HepG2 (cell line): ENCODE measurements at regions of chr12 and their contacts with region 1.

Region 1: GRCh38 chr12:6873094-6874014 is at the start of gene SPSB2:
- DNase-seq: peak; percentile 94
- ATAC-seq: peak; percentile 81
- H3K4me3 ChIP-seq: peak within 1 kb of the TSS; percentile 74 to 95 (median 76)
- H3K27ac ChIP-seq: peak within 1 kb of the TSS; percentile 79
- H3K4me1 ChIP-seq: peaks cover 48% of the 10 kb centered on the region
- H3K27me3 ChIP-seq: no peaks in the 10 kb centered on the region; a peak in 1 of 5 replicates
- CTCF ChIP-seq: no peak
- EP300 ChIP-seq: 0 out of 4 replicates have a peak, but pooled peaks of 1 of the 2 experiments have one; percentile 5
- POLR2A ChIP-seq: no peak; a peak in 1 of 4 replicates
- RAD21 ChIP-seq: no peak
- total RNA-seq, gene SPSB2: 4.0 and 6.2 TPM in 2 replicates

Region 2: GRCh38 chr12:6884539-6884938 is 11.2 kb after region 1 on chr12:
- CTCF ChIA-PET with region 1: no interaction called
- POLR2A ChIA-PET with region 1: interaction called, 73 read pairs
- in situ Hi-C with region 1: no loop called
- intact Hi-C with region 1: no loop called
- DNase-seq: no peak
- ATAC-seq: no peak
- H3K4me3 ChIP-seq: no peak overlapping the region
- H3K27ac ChIP-seq: no peak overlapping the region
- H3K4me1 ChIP-seq: peaks cover 61% of the 10 kb centered on the region
- H3K27me3 ChIP-seq: no peaks in the 10 kb centered on the region
- CTCF ChIP-seq: no peak
- EP300 ChIP-seq: no peak
- POLR2A ChIP-seq: no peak
- RAD21 ChIP-seq: no peak

Region 3: GRCh38 chr12:6904280-6905278 is 31.2 kb after region 1 on chr12 and contains the start of gene LRRC23:
- CTCF ChIA-PET with region 1: no interaction called
- POLR2A ChIA-PET with region 1: interaction called, 10 read pairs
- in situ Hi-C with region 1: no loop called
- intact Hi-C with region 1: no loop called
- DNase-seq: peak; percentile 90
- ATAC-seq: peak; percentile 89
- H3K4me3 ChIP-seq: peak within 1 kb of the TSS; percentile 78 to 88 (median 83)
- H3K27ac ChIP-seq: peak within 1 kb of the TSS; percentile 69
- H3K4me1 ChIP-seq: peaks cover 60% of the 10 kb centered on the region
- H3K27me3 ChIP-seq: no peaks in the 10 kb centered on the region
- CTCF ChIP-seq: no peak
- EP300 ChIP-seq: peak in 1 of 2 experiments; percentile 63; a peak in 1 of 4 replicates
- POLR2A ChIP-seq: peak in 1 of 2 experiments; percentile 64; a peak in 2 of 4 replicates
- RAD21 ChIP-seq: no peak
- total RNA-seq, gene LRRC23: 6.0 and 6.7 TPM in 2 replicates

Region 4: DNA sequence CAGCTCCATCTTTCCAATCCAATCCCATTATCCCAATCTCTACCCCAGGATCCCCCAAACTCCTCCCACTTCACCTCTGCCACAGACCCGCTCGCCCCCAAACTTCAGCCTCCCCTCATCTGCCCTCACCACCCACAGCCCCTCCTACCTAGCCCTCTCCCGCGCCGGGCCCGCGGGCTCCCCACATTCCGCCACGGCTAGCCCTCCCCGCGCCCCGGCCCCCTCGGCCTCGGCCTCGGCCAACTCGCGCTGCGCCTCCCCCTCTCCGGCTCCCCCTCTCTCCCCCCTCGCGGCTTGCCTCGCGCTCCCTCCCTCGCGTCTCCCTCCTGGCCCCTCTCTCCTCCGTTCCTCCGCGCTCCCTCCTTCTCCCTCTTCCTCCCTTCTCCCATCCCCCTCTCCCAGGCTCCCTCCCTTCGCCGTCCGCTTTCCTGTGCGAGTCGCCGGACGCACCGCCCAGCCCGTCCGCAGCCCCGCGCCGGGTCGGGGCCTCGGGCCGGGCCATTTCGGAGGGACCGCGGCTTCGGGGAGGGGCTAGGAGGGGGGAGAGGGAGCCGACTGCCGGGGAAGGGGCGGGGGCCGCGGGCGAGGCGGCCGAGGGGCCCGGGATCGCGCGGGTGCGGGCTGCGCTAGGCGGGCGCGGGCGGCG is 54.1 kb after region 1 on chr12 and contains the start of gene ATN1:
- CTCF ChIA-PET with region 1: interaction called, 4 read pairs
- POLR2A ChIA-PET with region 1: interaction called, 24 read pairs
- in situ Hi-C with region 1: no loop called
- intact Hi-C with region 1: no loop called
- DNase-seq: no peak
- ATAC-seq: peak; percentile 18
- H3K4me3 ChIP-seq: peak within 1 kb of the TSS; percentile 82 to 93 (median 90)
- H3K27ac ChIP-seq: peak within 1 kb of the TSS; percentile 64
- H3K4me1 ChIP-seq: peaks cover 66% of the 10 kb centered on the region
- H3K27me3 ChIP-seq: no peaks in the 10 kb centered on the region; a peak in 1 of 5 replicates
- CTCF ChIP-seq: no peak
- EP300 ChIP-seq: no peak
- POLR2A ChIP-seq: peak in 1 of 2 experiments; percentile 53; a peak in 1 of 4 replicates
- RAD21 ChIP-seq: no peak
- total RNA-seq, gene ATN1: 2.1 TPM in 2 replicates